Breast epithelium (tissue), 4 donors: ENCODE measurements at regions of chr11 and their contacts with region 1.

Region 1: DNA sequence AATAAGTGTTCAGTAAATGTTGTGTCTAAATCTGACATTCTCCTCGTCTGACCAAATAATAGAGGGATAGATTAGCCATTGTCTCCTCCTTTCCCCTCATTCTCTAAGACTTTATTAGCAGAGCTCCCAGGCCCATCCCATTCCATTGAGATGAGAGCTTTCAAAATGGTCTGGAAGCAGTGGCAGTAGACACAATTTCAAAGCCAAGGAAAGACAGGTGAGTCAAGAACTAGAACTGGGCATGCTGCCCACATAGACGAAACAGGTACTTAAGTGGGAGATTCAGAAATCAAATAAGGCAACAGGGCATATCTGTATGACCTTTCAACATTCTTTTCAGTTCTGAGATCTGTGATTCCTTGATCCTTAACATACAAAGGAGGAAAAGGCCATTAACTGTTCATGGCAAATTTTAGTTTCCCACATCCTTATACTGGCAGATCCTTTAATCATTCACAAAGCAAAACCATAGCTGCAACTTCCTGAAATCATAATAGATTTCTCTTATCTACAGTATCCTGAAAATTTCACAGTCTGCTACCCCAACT is 96.6 kb upstream of the KCNA4 start:
- DNase-seq: no peak
- H3K4me3 ChIP-seq: no peak overlapping the region
- H3K27ac ChIP-seq: no peak overlapping the region
- H3K4me1 ChIP-seq: no peaks in the 10 kb centered on the region
- H3K27me3 ChIP-seq: no peaks in the 10 kb centered on the region
- CTCF ChIP-seq: no peak
- POLR2A ChIP-seq: no peak

Region 2: GRCh38 chr11:29679996-29680395 is 433.4 kb before region 1 on chr11:
- intact Hi-C with region 1: loop called (anchors 10 kb)
- DNase-seq: no peak
- H3K4me3 ChIP-seq: no peak overlapping the region
- H3K27ac ChIP-seq: no peak overlapping the region
- H3K4me1 ChIP-seq: no peaks in the 10 kb centered on the region
- H3K27me3 ChIP-seq: no peaks in the 10 kb centered on the region
- CTCF ChIP-seq: no peak
- POLR2A ChIP-seq: no peak